Activated B cell treated with CpG ODN at 0.5 μM for 24 hours (primary cell): ENCODE measurements at regions of chr17 and their contacts with region 1.

Region 1: DNA sequence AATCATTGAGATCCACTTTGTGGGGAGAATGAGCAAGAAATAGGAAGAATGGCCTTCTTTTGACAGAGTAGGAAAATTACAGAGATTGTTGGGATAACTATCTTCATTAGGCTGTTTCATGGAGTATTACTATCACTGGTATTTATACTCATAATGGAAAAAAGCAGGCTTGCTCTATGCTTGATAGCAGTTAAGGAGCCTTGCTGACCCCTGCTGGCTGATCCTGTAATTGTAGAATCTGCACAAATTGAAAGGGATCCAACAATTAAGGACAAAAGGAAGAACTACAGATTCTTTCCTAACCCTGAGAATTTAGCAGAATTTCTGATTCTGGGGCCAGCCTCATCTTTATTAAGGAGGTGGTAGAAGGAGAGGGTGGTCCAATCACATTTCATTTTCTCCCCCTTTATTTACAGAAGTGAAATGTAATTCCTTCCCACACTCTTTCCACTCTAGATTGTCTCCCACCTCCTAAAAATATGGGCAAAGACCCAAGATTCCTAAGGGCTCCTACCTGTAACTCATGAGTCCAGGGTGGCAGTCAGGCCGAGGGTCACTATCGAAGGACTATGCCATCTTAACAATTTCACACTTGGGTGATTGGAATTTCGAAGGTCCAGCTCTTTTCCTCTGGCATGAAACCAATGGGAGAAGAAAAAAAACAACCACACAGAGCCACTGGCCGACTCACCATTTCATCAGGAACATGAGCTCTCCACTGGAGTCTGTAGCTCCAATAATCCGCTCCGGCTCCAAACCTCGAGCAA is 26.3 kb downstream of the NFE2L1 start:
- DNase-seq: peak; percentile 36
- ATAC-seq: peak; percentile 93
- H3K4me3 Mint-ChIP-seq: no peak overlapping the region
- H3K27ac Mint-ChIP-seq: no peak overlapping the region
- H3K4me1 Mint-ChIP-seq: no peaks in the 10 kb centered on the region
- H3K27me3 Mint-ChIP-seq: no peaks in the 10 kb centered on the region
- CTCF ChIP-seq: no peak

Region 2: DNA sequence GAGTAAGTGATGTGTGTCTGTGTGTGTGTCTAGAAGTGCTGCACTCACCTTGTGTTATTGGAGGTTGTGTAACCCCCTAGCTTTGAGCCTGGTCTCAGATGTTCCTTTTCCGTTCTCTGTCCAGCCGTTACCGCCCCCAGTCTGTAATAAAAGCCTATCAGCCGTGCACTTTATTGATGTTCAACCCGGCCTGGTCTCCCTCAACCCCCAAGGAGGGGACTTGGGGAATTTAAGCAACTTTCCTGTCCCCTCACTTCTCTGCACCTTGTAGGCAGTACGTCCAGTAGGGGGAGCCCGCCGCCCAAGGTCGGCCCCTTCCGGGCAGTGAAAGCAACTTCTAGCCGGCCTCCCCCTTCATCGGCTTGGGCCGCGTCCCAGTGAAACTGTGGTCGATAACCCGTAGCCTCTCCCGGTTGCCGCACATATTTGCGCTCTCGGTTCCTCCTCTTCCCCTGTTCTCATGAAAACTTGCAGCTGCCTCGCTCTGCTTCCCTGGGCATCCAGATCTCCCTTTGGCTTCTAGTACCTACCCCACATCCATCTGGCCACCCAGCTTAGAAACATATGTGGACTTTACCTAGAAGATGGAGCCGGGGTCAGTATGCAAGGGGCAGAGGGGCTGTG is 125.2 kb before region 1 on chr17:
- CTCF ChIA-PET with region 1: interaction called, 4 read pairs
- POLR2A ChIA-PET with region 1: no interaction called
- intact Hi-C with region 1: loop called (anchors 1 kb)
- DNase-seq: peak; percentile 76
- ATAC-seq: peak; percentile 80
- H3K4me3 Mint-ChIP-seq: peak overlapping the region; percentile 72
- H3K27ac Mint-ChIP-seq: peak overlapping the region; percentile 62
- H3K4me1 Mint-ChIP-seq: peaks cover 33% of the 10 kb centered on the region
- H3K27me3 Mint-ChIP-seq: no peaks in the 10 kb centered on the region
- CTCF ChIP-seq: peak; percentile 78

Region 3: GRCh38 chr17:48030531-48030930 is 44.0 kb before region 1 on chr17:
- CTCF ChIA-PET with region 1: interaction called, 148 read pairs
- POLR2A ChIA-PET with region 1: interaction called, 8 read pairs
- intact Hi-C with region 1: loop called (anchors 1 kb)
- DNase-seq: no peak
- ATAC-seq: no peak
- H3K4me3 Mint-ChIP-seq: no peak overlapping the region
- H3K27ac Mint-ChIP-seq: no peak overlapping the region
- H3K4me1 Mint-ChIP-seq: peaks cover 13% of the 10 kb centered on the region
- H3K27me3 Mint-ChIP-seq: peaks cover 31% of the 10 kb centered on the region
- CTCF ChIP-seq: no peak

Region 4: DNA sequence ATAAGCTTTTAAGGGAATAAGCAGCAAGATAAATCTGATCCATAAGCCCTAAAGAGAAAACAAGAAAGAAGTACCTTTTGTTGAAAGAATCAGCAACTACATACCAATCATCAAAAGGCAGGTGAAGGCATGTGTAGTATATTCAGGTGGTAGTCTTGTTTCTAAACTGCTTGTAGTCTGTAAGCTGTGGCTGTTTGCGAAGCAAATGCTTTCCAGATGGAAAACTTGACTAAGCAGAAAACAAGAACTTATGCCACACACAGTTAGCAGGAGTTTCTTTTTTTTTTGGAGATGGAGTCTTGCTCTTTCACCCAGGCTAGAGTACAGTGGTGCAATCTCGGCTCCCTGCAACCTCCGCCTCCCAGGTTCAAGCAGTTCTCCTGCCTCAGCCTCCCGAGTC is 21.1 kb after region 1 on chr17:
- CTCF ChIA-PET with region 1: interaction called, 16 read pairs
- POLR2A ChIA-PET with region 1: no interaction called
- intact Hi-C with region 1: no loop called
- DNase-seq: no peak
- ATAC-seq: no peak
- H3K4me3 Mint-ChIP-seq: no peak overlapping the region
- H3K27ac Mint-ChIP-seq: no peak overlapping the region
- H3K4me1 Mint-ChIP-seq: peaks cover 21% of the 10 kb centered on the region
- H3K27me3 Mint-ChIP-seq: no peaks in the 10 kb centered on the region
- CTCF ChIP-seq: no peak

Region 5: GRCh38 chr17:48123111-48123510 is 48.6 kb after region 1 on chr17:
- CTCF ChIA-PET with region 1: interaction called, 169 read pairs
- POLR2A ChIA-PET with region 1: no interaction called
- intact Hi-C with region 1: no loop called
- DNase-seq: no peak
- ATAC-seq: no peak
- H3K4me3 Mint-ChIP-seq: no peak overlapping the region
- H3K27ac Mint-ChIP-seq: no peak overlapping the region
- H3K4me1 Mint-ChIP-seq: no peaks in the 10 kb centered on the region
- H3K27me3 Mint-ChIP-seq: no peaks in the 10 kb centered on the region
- CTCF ChIP-seq: no peak